Activated CD4-positive, alpha-beta memory T cell treated with anti-CD3 and anti-CD28 coated beads for 36 hours (primary cell): ENCODE measurements at regions of chr1 and their contacts with region 1.

Region 1: GRCh38 chr1:21294266-21294989 is 4.2 kb upstream of the ECE1 start:
- DNase-seq: peak; percentile 95
- H3K4me3 Mint-ChIP-seq: peak overlapping the region; percentile 75
- H3K27ac Mint-ChIP-seq: peak overlapping the region; percentile 99
- H3K4me1 Mint-ChIP-seq: peaks cover 82% of the 10 kb centered on the region
- H3K27me3 Mint-ChIP-seq: no peaks in the 10 kb centered on the region

Region 2: DNA sequence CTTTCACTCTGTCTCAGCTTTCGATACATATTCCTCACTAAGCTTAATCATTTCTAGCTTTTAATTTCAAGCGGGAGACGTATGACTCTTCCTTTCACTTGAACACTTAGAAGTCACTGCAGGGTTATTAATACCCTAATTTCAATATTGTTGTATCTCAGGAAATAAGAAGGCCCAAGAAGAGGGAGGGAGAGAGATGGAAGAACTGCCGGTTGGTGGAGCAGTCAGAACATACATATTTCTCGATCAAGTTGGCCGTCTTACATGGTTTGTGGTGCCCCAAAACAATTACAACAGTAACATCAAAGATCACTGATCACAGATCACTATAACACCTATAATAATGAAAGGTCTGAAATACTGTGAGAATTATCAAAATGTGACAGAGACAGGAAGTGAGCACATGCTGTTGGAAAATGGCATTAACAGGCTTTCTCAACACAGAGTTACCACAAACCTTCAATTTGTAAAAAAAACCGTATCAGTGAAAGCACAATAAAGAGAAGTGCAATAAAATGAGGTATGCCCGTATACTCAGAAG is 361.9 kb before region 1 on chr1:
- CTCF ChIA-PET with region 1: no interaction called
- POLR2A ChIA-PET with region 1: no interaction called
- intact Hi-C with region 1: loop called (anchors 1 kb)
- DNase-seq: peak; percentile 64
- H3K4me3 Mint-ChIP-seq: peak overlapping the region; percentile 17
- H3K27ac Mint-ChIP-seq: peak overlapping the region; percentile 82
- H3K4me1 Mint-ChIP-seq: peaks cover 37% of the 10 kb centered on the region
- H3K27me3 Mint-ChIP-seq: no peaks in the 10 kb centered on the region

Region 3: GRCh38 chr1:21280011-21280471 is 14.4 kb before region 1 on chr1:
- CTCF ChIA-PET with region 1: interaction called, 15 read pairs
- POLR2A ChIA-PET with region 1: interaction called, 26 read pairs
- intact Hi-C with region 1: loop called (anchors 1 kb)
- DNase-seq: no peak
- H3K4me3 Mint-ChIP-seq: peak overlapping the region; percentile 58
- H3K27ac Mint-ChIP-seq: peak overlapping the region; percentile 96
- H3K4me1 Mint-ChIP-seq: peaks cover 62% of the 10 kb centered on the region
- H3K27me3 Mint-ChIP-seq: no peaks in the 10 kb centered on the region

Region 4: GRCh38 chr1:21344750-21345443 is 50.5 kb after region 1 on chr1:
- CTCF ChIA-PET with region 1: interaction called, 15 read pairs
- POLR2A ChIA-PET with region 1: interaction called, 50 read pairs
- intact Hi-C with region 1: loop called (anchors 1 kb)
- DNase-seq: peak; percentile 45
- H3K4me3 Mint-ChIP-seq: peak overlapping the region; percentile 91
- H3K27ac Mint-ChIP-seq: peak overlapping the region; percentile 94
- H3K4me1 Mint-ChIP-seq: peaks cover 40% of the 10 kb centered on the region
- H3K27me3 Mint-ChIP-seq: no peaks in the 10 kb centered on the region

Region 5: DNA sequence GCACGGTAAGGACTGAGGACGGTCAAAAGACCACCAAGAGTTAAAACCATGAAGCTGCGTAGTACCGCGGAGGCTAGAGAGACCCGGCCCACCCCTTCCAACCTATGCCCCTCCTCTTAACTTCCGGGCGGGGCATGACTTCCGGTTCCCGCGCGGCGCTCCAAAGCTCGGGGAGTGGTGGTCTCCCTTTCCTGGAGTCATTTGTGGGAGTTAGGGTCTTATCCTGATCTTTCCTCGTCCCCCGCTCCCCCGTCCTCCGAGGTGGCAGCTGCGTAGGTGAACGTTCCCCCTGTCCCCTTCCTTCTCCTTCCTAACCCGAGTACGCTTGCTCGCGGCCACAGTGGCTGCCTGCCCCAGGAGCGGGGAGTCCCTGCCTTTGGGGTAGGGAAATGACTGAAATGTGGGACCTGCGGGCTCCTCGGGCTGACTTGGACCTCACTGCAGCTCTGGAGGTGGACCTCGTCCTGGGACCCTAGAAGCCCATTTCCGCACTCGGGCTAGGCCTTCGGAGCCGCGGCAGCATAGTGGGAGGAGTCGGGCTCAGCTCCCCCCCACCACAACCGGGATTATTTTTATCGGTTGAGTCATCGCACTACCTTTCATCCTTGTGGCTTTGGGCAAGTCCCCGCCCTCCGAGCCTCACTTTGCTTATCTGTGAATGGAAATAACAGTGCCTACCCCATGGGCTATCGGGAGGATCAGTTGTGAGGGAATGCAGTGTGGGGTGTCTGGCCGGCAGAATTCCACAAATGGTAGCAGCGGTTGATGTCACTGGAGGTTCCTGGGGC is 731.1 kb after region 1 on chr1:
- CTCF ChIA-PET with region 1: no interaction called
- POLR2A ChIA-PET with region 1: no interaction called
- intact Hi-C with region 1: loop called (anchors 10 kb)
- DNase-seq: peak; percentile 92
- H3K4me3 Mint-ChIP-seq: peak overlapping the region; percentile 95
- H3K27ac Mint-ChIP-seq: peak overlapping the region; percentile 99
- H3K4me1 Mint-ChIP-seq: peaks cover 43% of the 10 kb centered on the region
- H3K27me3 Mint-ChIP-seq: no peaks in the 10 kb centered on the region